Activated CD4-positive, alpha-beta T cell treated with anti-CD3 and anti-CD28 coated beads for 36 hours (primary cell): ENCODE measurements at regions of chr4 and their contacts with region 1.

Region 1: GRCh38 chr4:39134683-39135319 is 47.5 kb upstream of the WDR19 start:
- DNase-seq: no peak
- ATAC-seq: no peak
- H3K4me3 Mint-ChIP-seq: no peak overlapping the region
- H3K27ac Mint-ChIP-seq: no peak overlapping the region
- H3K4me1 Mint-ChIP-seq: peaks cover 9% of the 10 kb centered on the region
- H3K27me3 Mint-ChIP-seq: no peaks in the 10 kb centered on the region

Region 2: DNA sequence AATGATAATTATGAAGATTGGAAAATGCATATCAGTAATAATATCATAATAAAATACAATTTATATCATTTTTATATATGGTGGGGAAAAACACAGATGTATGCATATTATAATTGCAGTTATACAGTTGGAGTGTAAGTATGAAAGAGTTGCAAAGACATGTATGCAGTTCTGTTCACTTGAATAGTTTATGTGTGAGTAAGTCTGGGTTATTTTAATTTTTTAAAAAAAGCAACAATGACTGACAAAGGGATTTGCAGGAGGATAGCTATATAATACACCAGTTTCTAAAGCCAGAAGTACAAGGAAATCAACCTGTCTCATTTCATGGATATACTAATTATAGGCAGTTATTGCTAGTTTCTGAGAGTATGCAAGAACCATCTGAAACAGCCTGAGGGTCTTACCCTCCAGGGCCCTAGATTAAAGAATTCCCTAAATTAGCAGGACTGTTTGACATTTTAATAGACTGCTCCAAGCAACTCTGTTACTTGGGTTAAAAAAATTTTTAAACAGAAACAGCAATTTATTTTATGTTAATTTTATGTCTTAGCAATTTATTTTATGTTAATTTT is 227.0 kb before region 1 on chr4:
- CTCF ChIA-PET with region 1: interaction called, 121 read pairs
- POLR2A ChIA-PET with region 1: no interaction called
- intact Hi-C with region 1: loop called (anchors 1 kb)
- DNase-seq: no peak
- ATAC-seq: no peak
- H3K4me3 Mint-ChIP-seq: no peak overlapping the region
- H3K27ac Mint-ChIP-seq: no peak overlapping the region
- H3K4me1 Mint-ChIP-seq: no peaks in the 10 kb centered on the region
- H3K27me3 Mint-ChIP-seq: no peaks in the 10 kb centered on the region

Region 3: GRCh38 chr4:38914854-38915253 is 219.9 kb before region 1 on chr4:
- CTCF ChIA-PET with region 1: interaction called, 13 read pairs
- POLR2A ChIA-PET with region 1: no interaction called
- intact Hi-C with region 1: no loop called
- DNase-seq: peak; percentile 20
- ATAC-seq: peak; percentile 71
- H3K4me3 Mint-ChIP-seq: peak overlapping the region; percentile 29
- H3K27ac Mint-ChIP-seq: peak overlapping the region; percentile 42
- H3K4me1 Mint-ChIP-seq: peaks cover 10% of the 10 kb centered on the region
- H3K27me3 Mint-ChIP-seq: no peaks in the 10 kb centered on the region

Region 4: GRCh38 chr4:39146211-39146610 is 11.4 kb after region 1 on chr4:
- CTCF ChIA-PET with region 1: interaction called, 11 read pairs
- POLR2A ChIA-PET with region 1: no interaction called
- intact Hi-C with region 1: no loop called
- DNase-seq: no peak
- ATAC-seq: no peak
- H3K4me3 Mint-ChIP-seq: no peak overlapping the region
- H3K27ac Mint-ChIP-seq: no peak overlapping the region
- H3K4me1 Mint-ChIP-seq: no peaks in the 10 kb centered on the region
- H3K27me3 Mint-ChIP-seq: no peaks in the 10 kb centered on the region